Posterior cingulate gyrus (tissue), 11 donors: ENCODE measurements at regions of chr3 and their contacts with region 1.

Region 1: GRCh38 chr3:169149349-169149890 is 514.1 kb downstream of the MECOM start:
- DNase-seq: peak; percentile 65 to 96 (median 76)

Region 2: DNA sequence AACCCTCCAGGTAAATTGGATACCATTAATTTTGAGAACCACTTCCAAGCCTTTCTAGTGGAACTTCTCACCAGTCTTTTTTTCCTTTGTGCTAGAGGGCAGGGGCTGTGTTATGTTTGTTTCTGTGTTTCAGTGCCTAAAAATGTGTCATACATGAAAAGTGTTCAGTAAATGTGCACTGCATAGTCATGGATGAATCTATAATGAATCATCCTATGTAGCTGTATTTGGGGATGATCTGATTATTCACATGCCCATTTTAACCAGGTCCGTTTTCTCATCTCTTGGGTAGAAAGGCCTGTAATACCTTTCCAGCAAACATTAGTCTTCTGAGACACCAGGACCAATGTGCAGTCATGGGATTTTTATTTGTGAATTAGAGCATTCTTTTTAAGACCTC is 470.7 kb before region 1 on chr3:
- intact Hi-C with region 1: no loop called
- DNase-seq: no peak

Region 3: DNA sequence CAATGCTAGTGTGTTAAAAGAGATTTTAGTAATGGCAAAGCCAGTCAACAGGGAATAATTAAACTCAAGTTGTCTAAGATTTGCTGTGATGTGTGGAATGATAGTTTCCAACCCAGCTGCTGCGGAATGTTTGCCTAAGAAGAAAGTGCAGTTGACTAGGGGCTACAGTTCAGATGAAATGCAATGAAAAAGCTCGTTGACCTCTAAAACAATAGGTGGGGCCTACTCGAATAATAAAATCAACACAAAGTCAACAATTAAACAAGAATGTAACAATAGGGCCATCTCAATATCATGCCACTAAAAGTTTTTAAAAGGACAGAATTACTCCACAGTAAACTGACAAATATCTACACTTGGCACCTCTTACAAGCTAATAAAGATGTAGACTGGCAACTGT is 29.9 kb after region 1 on chr3:
- intact Hi-C with region 1: no loop called
- DNase-seq: no peak

Region 4: DNA sequence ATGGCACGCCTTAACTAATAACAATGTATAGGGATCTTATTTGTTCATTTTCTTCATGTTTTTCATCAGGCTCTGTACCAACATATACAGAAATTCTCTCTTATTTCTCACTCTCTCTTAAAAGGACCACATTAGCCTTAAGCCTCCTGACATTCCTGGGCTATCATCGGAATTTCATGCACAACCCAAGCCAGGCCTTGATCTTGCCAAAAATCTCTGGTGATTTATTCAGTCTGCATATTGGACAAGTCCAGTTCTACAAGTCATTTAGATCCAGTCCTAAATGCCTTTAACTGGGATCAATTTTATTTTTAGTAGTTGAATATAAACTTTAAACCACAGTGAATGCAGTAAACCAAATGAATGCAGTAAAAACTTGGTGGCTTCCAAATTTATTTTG is 128.7 kb after region 1 on chr3:
- intact Hi-C with region 1: no loop called
- DNase-seq: no peak

Region 5: DNA sequence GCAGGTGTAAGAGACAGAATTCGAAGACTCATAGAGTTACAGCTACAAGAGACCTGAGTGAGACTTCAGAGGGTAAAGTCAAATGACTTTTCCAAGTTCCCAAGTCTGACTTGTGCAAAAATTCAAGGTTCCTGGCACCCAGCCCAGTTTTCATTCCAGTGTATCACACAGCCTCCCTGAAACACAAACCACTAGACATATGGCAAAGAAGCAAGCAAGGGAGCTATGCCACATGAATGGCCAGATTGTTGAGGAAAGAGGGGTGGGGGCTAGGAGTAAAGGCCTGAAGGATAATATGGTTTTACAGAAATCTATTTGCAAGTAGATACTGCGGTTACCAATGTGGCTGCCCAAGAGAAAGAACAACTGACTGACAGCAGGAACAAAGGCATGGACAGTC is 212.9 kb after region 1 on chr3:
- intact Hi-C with region 1: loop called (anchors 10 kb)
- DNase-seq: peak in 2 of 10 donors; percentile 36 to 55

Region 6: DNA sequence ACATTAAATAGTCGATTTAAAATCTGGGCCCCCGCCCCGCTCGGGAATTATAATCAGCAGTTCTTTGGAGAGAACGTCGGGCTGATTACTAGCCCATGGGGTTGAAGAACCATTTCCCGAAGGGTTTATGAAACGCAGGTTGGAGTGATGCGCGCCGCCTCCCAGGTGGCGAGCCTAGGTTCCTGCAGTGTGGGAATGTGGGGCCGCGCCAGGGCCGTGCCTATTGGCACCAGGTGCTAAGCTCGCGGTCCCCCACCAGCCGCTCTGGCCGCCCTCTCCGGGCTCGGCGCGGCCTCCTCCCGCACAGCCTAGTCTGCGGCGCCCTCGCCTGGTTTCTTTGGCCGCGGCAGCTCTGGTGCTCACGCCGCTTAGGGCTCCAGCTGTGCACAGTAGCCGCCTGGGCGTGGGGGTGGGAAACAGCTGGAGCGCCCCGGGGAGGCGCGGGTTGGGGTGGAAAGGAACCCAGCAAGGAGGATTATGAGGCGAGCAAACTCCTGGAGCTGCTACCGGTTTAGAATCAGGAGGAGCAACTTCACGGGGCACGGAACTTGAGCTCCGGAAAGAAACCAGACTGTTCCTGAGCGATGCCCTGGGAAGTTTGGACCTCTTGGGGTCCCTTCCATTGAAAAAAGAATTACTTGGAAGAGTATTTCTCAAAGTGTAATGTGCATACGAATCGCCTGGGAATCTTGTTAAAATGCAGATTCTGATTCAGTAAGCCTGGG is 519.7 kb after region 1 on chr3:
- intact Hi-C with region 1: loop called (anchors 5 kb)
- DNase-seq: peak in 8 of 10 donors; percentile 32 to 94 (median 63)

Region 7: DNA sequence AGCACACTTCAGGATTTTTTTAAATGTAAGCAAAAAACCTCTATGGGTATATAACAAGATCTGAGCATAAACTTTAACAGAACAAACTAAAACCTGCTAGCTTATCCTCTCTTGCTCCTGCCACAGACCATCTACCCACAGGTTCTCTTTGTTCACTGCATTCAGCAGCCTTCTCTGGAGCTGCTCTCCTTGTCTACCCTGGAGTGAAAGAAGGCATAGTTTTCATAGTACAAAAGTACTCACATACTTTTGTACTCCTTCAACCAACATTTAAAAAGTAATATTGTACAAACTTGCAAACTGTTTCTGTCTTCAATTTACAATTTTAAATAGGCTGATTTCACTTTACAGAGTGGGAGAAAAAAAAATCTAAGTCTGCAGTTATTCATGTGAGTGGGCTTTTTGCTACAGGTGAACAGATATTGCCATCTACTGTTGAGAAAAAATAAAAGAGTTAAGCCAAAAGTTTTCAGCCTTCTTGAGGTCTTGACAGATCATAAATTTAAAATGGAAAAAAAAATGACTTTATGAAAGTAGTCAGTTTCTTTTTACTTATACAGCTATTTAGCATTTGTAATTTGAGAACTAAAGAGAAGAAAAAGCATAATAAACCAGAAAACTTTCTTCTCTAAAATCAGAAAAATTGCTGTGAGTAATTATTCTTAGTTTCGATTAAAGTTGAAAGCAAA is 595.1 kb after region 1 on chr3:
- intact Hi-C with region 1: loop called (anchors 10 kb)
- DNase-seq: no peak